ENCODE measurements at regions of chr16 and their contacts with region 1.

Region 1: GRCh38 chr16:89873972-89874689 is 739 bp downstream of the TCF25 start:
- DNase-seq: peak; percentile 61
- H3K4me3 ChIP-seq: peak overlapping the region; percentile 100
- H3K27me3 ChIP-seq: no peaks in the 10 kb centered on the region
- CTCF ChIP-seq: no peak

Region 2: GRCh38 chr16:89700100-89700648 is 174.0 kb before region 1 on chr16:
- CTCF ChIA-PET with region 1: interaction called, 10 read pairs
- POLR2A ChIA-PET with region 1: no interaction called
- DNase-seq: peak; percentile 81
- H3K4me3 ChIP-seq: peak overlapping the region; percentile 95
- H3K27me3 ChIP-seq: no peaks in the 10 kb centered on the region
- CTCF ChIP-seq: peak; percentile 82

Region 3: DNA sequence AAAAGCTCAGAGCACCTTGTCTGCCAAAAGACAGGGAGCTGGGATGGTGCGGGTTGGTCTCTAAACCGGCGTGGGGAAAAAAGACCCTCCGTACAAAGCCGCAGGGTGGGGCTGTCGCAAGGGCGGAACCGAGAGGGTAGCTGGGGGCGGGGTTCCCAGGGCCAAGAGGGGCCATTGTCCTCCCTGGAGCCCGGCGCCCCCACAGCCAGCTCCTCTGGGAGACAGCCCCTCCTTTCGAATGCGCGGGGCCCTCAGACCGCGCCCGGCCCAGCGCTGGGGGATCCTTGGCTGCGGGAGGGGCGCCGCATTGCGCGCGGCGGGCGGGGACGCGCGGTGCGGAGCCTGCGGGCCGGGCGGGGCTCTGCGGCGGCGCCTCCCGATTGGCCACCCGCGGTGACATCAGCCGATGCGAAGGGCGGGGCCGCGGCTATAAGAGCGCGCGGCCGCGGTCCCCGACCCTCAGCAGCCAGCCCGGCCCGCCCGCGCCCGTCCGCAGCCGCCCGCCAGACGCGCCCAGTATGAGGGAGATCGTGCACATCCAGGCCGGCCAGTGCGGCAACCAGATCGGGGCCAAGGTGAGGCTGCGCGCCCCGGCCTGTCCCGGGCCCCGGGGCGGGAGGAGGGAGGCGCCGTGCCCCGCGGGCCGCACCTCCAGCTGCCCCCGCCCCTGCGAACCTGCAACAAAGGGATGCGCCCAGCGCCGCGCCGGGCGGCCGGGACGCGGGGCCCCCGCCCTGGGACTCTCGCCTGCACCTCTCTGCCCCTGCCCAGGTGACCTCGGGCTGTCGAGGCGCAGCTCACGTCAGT is 49.0 kb after region 1 on chr16 and contains the start of gene TUBB3:
- CTCF ChIA-PET with region 1: interaction called, 4 read pairs
- POLR2A ChIA-PET with region 1: interaction called, 13 read pairs
- DNase-seq: no peak
- H3K4me3 ChIP-seq: peak within 1 kb of the TSS; percentile 65
- H3K27me3 ChIP-seq: no peaks in the 10 kb centered on the region
- CTCF ChIP-seq: no peak
- polyA plus RNA-seq, gene TUBB3: 55.2 and 108 TPM in 2 replicates

Measured in BJ (cell line).